PC-9 (cell line): ENCODE measurements at regions of chr3 and their contacts with region 1.

Region 1: GRCh38 chr3:125462722-125463299 is 57.2 kb downstream of the SNX4 start:
- DNase-seq: no peak
- H3K4me3 ChIP-seq: no peak overlapping the region
- H3K27ac ChIP-seq: no peak overlapping the region
- H3K4me1 ChIP-seq: no peaks in the 10 kb centered on the region
- H3K27me3 ChIP-seq: no peaks in the 10 kb centered on the region
- CTCF ChIP-seq: no peak

Region 2: GRCh38 chr3:125519678-125520589 is 57.1 kb after region 1 on chr3 and contains the start of gene SNX4:
- CTCF ChIA-PET with region 1: no interaction called
- POLR2A ChIA-PET with region 1: interaction called, 19 read pairs
- intact Hi-C with region 1: no loop called
- DNase-seq: peak; percentile 84 to 94
- H3K4me3 ChIP-seq: peak within 1 kb of the TSS; percentile 91
- H3K27ac ChIP-seq: no peak within 1 kb of the TSS
- H3K4me1 ChIP-seq: no peaks in the 10 kb centered on the region; the same call in 1 of the 2 replicates
- H3K27me3 ChIP-seq: no peaks in the 10 kb centered on the region
- CTCF ChIP-seq: no peak
- total RNA-seq, gene SNX4: 28.6 and 31.6 TPM in 2 replicates